Heart right ventricle (tissue), 16 donors: ENCODE measurements at regions of chr9 and their contacts with region 1.

Region 1: DNA sequence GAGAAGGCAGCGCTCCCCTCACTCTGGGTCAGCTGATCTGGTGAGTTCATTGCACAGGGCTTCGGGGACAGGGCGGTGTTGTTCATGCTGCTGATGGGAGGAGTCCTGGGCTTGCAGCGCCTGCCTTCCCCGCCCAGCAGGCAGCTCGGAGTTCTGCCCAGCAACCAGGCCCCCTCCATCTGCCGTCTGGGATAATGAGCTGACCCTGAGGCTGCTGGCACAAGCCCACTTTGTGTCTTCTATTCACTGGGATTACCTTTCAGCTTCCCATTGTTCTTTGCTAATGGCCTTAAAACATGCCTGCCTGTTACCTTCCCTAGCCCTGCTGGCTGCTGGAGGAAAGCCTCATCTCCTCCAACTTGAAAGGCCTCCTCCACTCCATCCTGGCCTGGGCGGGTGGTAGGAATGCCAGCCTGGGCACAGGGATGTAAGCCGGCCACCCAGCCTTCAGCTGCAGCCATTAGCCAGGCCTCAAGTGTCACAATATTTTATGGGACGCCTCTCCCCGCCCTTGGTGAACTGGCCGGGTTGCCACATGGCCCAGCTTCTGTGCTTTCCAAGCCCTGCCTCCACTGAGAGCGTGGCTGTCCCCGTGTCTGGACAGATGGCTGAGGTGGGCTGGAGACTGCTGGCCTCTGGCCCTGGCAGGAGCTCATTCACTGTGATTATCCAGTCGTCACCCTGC is 70.4 kb downstream of the GADD45G start:
- DNase-seq: peak; percentile 62 to 70
- ATAC-seq: peak; percentile 74 to 88 (median 86)
- H3K4me3 ChIP-seq: no peak overlapping the region
- H3K27ac ChIP-seq: peak overlapping the region in 8 of 10 donors; percentile 15 to 79 (median 49)
- H3K4me1 ChIP-seq: peaks cover 0 to 34% (median 20%) of the 10 kb centered on the region in 9 donors
- H3K27me3 ChIP-seq: no peaks in the 10 kb centered on the region
- CTCF ChIP-seq: no peak

Region 2: DNA sequence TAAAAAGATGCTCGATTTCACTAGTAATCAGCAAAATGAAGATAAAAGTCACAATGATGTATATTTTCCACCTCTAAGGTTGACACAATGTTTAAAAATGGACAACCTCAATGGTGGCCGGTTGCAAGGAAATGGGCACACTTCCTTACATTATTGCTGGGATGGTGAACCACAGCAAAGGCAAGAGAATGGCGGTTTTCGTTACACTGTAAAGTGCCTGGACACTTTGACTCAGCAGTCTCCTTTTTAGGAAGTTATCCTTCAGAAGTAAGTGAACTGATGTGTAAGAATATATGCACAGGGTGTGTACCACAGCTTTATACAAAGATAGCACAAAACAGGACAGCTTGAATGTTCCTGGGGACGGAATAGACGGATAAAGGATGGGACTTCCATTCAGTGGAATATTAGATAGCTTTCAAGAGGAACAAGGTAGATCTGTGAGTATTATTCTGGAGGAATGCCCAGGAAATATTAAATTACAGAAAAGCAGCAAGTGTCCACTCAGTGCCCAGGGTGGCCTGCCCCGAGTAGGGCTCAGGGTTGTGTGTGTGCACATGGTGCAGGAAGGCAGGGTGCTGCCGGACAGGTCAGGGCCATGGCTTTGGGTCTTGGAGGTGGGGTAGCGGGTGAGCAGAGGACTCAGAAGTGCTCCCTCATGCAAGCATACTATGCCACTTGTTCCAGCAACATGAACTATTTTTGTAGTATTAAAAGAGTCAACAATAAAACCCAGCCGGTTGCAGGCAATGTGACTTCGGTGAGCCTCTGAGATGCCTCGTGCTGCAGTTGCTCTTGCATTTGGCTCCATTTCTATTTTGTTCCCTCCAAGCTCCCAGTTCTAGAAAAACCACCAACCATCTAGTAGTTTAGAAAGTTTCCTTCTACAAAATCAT is 45.9 kb before region 1 on chr9:
- intact Hi-C with region 1: loop called in 2 of 10 experiments (anchors 5 kb)
- DNase-seq: no peak
- ATAC-seq: no peak
- H3K4me3 ChIP-seq: no peak overlapping the region
- H3K27ac ChIP-seq: no peak overlapping the region
- H3K4me1 ChIP-seq: peaks cover 0 to 15% (median 2%) of the 10 kb centered on the region in 9 donors
- H3K27me3 ChIP-seq: peaks cover 0 to 6% (median 0%) of the 10 kb centered on the region in 7 donors
- CTCF ChIP-seq: no peak

Region 3: GRCh38 chr9:89750147-89750861 is 75.1 kb after region 1 on chr9:
- intact Hi-C with region 1: loop called in 2 of 10 experiments (anchors 10 kb)
- DNase-seq: peak; percentile 56 to 63
- ATAC-seq: peak; percentile 62 to 80 (median 74)
- H3K4me3 ChIP-seq: no peak overlapping the region
- H3K27ac ChIP-seq: no peak overlapping the region
- H3K4me1 ChIP-seq: peaks cover 0 to 36% (median 12%) of the 10 kb centered on the region in 9 donors
- H3K27me3 ChIP-seq: no peaks in the 10 kb centered on the region
- CTCF ChIP-seq: no peak

Region 4: DNA sequence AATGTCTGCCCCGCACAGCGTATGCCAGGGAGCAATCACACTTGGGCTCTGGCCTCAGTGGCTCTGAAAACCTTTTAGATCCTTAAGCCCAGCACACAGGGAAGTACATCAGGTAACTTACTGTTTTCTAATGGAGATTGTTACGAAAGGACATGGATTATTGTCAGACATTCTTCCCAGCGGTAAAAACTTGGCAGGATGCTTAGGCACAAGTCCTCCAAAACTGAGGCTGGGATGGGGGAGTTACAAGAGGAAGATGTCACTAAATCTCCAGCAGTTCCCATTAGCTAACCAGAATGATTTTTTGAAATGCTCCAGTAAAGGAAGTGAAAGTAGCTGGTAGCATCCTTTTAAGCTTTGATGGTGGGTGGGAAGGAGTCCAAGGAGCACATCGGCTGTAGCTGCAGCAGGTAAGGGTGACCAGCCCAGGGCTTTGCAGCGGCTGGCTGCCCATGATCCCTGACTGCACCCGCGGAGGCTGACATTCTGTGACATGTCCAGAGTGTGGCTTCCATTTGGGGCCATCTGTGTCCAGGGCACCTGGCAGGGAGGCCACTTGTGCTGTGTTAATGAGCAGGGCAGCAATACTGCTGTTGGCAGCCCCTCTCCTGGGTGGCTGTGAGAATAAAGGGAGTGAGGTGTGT is 95.5 kb after region 1 on chr9:
- intact Hi-C with region 1: no loop called
- DNase-seq: peak; percentile 13 to 24
- ATAC-seq: peak in 6 of 8 donors; percentile 43 to 86 (median 61)
- H3K4me3 ChIP-seq: no peak overlapping the region
- H3K27ac ChIP-seq: no peak overlapping the region
- H3K4me1 ChIP-seq: peaks cover 0 to 9% (median 0%) of the 10 kb centered on the region in 9 donors
- H3K27me3 ChIP-seq: peaks cover 0 to 7% (median 0%) of the 10 kb centered on the region in 7 donors
- CTCF ChIP-seq: no peak